Astrocyte of the cerebellum (primary cell): ENCODE measurements at regions of chr10 and their contacts with region 1.

Region 1: DNA sequence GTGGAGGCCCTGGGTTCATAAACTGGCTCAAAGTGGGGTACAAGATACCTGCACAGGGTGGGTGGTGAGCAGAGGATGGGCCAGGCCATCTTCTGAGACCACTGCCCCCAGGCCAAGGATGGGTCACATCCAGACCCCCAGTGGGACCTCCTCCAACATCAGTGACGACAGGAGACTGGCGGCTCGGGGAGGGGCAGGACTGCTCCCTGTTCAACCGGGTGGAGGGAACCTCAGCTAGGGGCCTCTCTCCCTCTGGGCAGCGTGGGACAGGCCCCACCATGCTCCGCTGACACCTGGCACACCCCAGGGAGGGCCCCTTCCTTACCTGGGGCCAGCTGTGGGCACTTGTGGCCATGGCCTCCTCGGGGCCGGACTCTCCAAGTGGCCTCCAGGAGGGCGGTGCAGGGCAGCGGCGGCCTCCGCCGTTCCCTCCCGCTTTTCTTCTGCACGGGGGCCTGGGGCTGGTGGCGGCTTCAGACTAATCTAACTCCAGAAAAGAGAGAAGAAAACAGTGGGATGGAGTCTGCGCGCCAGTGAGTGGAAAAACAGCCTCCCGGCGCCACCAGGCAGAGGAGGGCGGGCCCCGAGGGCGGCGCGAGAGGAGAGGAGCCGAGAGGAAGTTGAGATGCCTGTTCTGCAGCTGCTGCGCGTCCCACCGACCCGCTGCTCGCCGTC is at the start of gene CALHM2:
- DNase-seq: no peak
- H3K4me3 ChIP-seq: peak within 1 kb of the TSS; percentile 52
- CTCF ChIP-seq: no peak

Region 2: DNA sequence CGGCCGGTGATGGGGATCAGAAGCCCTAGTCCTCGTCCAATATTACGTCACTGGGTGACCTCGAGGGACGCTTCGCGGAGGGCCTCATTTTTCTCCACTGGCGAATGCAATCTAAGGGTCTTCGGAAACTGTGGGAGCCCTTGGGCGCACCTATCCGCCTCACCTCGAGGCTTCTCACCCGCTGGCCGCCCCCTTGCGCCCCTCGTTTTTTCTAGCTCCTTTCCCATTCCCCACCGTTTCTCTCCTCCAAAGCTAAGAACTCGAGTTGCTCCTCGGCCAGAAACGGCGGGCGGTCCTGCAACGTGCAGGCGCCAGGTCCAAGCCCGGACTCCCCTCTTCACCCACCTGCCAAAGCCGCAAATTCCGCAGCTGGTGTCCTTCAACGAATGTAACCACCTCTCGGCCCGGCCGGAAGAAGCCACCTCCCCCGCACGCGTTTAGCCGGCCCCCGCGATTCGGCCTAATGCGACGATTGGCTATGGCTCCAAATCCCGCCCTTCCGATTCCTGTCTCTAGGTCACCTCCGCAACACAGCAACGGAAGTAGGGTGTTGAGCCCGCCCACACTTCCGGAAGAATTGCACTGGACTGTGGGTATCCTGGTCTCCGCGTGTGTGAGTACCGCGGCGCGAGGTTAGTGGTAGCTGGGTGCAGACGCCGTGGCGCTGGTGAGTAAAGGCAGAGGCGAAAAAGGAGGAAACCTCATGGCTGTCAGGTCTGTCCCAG is 55.7 kb before region 1 on chr10 and contains the starts of genes ATP5MK and PDCD11:
- in situ Hi-C with region 1: loop called (anchors 5 kb)
- DNase-seq: peak; percentile 96
- H3K4me3 ChIP-seq: peak within 1 kb of the TSS; percentile 82
- CTCF ChIP-seq: peak; percentile 27

Region 3: DNA sequence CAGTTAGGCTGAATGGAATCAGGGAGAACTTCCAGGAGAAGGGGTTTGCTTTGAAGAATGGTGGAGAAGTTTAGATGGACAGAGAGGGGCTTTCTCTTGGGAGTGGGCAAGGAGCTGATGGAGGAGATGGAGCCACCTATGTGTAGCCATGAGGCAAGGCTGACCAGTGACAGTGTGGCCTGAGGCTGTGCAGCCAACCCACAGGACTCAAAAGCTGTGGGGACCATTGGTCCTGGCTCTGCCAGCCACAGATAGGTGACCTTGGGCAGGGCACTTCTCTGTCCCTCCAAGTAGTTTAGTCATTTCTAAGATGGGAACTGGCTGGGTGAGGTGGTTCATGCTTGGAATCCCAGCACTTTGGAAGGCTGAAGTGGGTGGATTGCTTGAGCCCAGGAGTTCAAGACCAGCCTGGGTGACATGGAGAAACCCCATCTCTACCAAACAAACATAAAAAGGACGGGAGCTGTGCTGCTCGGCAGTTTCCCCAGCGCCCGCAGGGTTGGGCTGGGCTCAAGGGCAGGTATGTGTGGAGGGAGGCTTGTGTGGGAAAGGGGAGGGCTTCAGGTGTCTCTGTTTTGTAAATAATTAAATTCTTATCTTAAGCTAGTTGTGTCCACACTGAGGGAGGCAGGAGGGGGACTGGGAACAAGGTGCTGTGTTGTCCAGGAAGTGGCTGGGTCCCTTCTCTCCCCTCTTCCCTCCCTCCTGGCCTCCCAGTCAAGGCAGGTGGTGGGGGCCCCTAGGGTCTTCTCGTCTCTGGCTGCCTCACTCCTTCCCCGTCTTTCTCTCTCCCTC is 60.4 kb after region 1 on chr10:
- in situ Hi-C with region 1: loop called (anchors 10 kb)
- DNase-seq: no peak
- H3K4me3 ChIP-seq: no peak overlapping the region
- CTCF ChIP-seq: no peak